HepG2 (cell line): ENCODE measurements at regions of chr17 and their contacts with region 1.

Region 1: GRCh38 chr17:20009302-20010098 is at the start of gene SPECC1:
- DNase-seq: peak; percentile 62
- ATAC-seq: peak; percentile 98
- H3K4me3 ChIP-seq: peak within 1 kb of the TSS; percentile 59 to 74 (median 62)
- H3K27ac ChIP-seq: no peak within 1 kb of the TSS
- H3K4me1 ChIP-seq: peaks cover 20% of the 10 kb centered on the region
- H3K27me3 ChIP-seq: peaks cover 2 to 30% of the 10 kb centered on the region in 2 experiments; a peak in 4 of 5 replicates
- CTCF ChIP-seq: peak; percentile 79
- EP300 ChIP-seq: no peak
- POLR2A ChIP-seq: no peak
- RAD21 ChIP-seq: peak; percentile 61; the same call in 1 of the 2 replicates
- total RNA-seq, gene SPECC1: 4.2 and 6.9 TPM in 2 replicates

Region 2: GRCh38 chr17:19986941-19987861 is 22.3 kb before region 1 on chr17:
- CTCF ChIA-PET with region 1: interaction called, 9 read pairs
- POLR2A ChIA-PET with region 1: no interaction called
- in situ Hi-C with region 1: no loop called
- intact Hi-C with region 1: loop called (anchors 2 kb)
- DNase-seq: no peak
- ATAC-seq: no peak
- H3K4me3 ChIP-seq: no peak overlapping the region; a peak in 1 of 6 replicates
- H3K27ac ChIP-seq: no peak overlapping the region
- H3K4me1 ChIP-seq: 0 out of 2 replicates have a peak, but pooled peaks cover 13% of the 10 kb centered on the region
- H3K27me3 ChIP-seq: peaks cover 0 to 4% of the 10 kb centered on the region in 2 experiments; a peak in 1 of 5 replicates
- CTCF ChIP-seq: no peak
- EP300 ChIP-seq: no peak
- POLR2A ChIP-seq: no peak
- RAD21 ChIP-seq: no peak

Region 3: GRCh38 chr17:20028443-20028842 is 18.9 kb after region 1 on chr17:
- CTCF ChIA-PET with region 1: no interaction called
- POLR2A ChIA-PET with region 1: no interaction called
- in situ Hi-C with region 1: no loop called
- intact Hi-C with region 1: no loop called
- DNase-seq: no peak
- ATAC-seq: no peak
- H3K4me3 ChIP-seq: no peak overlapping the region
- H3K27ac ChIP-seq: no peak overlapping the region
- H3K4me1 ChIP-seq: no peaks in the 10 kb centered on the region
- H3K27me3 ChIP-seq: no peaks in the 10 kb centered on the region
- CTCF ChIP-seq: no peak
- EP300 ChIP-seq: no peak
- POLR2A ChIP-seq: no peak
- RAD21 ChIP-seq: no peak

Region 4: DNA sequence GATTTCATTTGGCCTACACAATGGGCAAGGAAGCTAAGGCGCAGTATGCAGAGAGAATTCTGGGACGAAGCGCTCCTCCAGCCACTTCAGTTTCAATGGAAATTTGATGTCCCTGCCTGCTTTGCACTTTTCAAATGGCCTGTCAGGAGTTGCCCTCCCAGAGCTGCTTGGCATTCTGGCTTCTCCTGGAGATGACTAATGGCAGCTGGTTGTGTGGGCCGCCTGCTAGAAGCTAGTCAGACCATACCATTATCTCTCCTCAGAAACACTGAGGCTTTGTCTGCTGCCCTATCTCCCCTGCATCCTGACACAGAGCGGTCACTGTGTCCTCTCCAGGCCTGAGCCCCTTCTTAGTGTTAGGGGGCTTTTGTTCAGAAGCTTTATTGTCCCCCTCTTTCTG is 179.8 kb after region 1 on chr17:
- CTCF ChIA-PET with region 1: no interaction called
- POLR2A ChIA-PET with region 1: no interaction called
- in situ Hi-C with region 1: no loop called
- intact Hi-C with region 1: no loop called
- DNase-seq: no peak
- ATAC-seq: no peak
- H3K4me3 ChIP-seq: no peak overlapping the region
- H3K27ac ChIP-seq: no peak overlapping the region
- H3K4me1 ChIP-seq: no peaks in the 10 kb centered on the region
- H3K27me3 ChIP-seq: no peaks in the 10 kb centered on the region
- CTCF ChIP-seq: no peak
- EP300 ChIP-seq: no peak
- POLR2A ChIP-seq: no peak
- RAD21 ChIP-seq: no peak